ENCODE measurements at regions of chr10 and their contacts with region 1.

Region 1: GRCh38 chr10:88944813-88945212 is 7.8 kb downstream of the ACTA2 start:
- DNase-seq: peak; percentile 23
- H3K4me3 ChIP-seq: no peak overlapping the region
- H3K27ac ChIP-seq: no peak overlapping the region
- H3K4me1 ChIP-seq: peaks cover 11% of the 10 kb centered on the region
- CTCF ChIP-seq: no peak

Region 2: GRCh38 chr10:88386821-88387773 is 557.7 kb before region 1 on chr10:
- CTCF ChIA-PET with region 1: no interaction called
- POLR2A ChIA-PET with region 1: no interaction called
- intact Hi-C with region 1: no loop called
- DNase-seq: peak; percentile 91
- H3K4me3 ChIP-seq: peak overlapping the region; percentile 65
- H3K27ac ChIP-seq: peak overlapping the region; percentile 99
- H3K4me1 ChIP-seq: peaks cover 85% of the 10 kb centered on the region
- CTCF ChIP-seq: no peak

Region 3: DNA sequence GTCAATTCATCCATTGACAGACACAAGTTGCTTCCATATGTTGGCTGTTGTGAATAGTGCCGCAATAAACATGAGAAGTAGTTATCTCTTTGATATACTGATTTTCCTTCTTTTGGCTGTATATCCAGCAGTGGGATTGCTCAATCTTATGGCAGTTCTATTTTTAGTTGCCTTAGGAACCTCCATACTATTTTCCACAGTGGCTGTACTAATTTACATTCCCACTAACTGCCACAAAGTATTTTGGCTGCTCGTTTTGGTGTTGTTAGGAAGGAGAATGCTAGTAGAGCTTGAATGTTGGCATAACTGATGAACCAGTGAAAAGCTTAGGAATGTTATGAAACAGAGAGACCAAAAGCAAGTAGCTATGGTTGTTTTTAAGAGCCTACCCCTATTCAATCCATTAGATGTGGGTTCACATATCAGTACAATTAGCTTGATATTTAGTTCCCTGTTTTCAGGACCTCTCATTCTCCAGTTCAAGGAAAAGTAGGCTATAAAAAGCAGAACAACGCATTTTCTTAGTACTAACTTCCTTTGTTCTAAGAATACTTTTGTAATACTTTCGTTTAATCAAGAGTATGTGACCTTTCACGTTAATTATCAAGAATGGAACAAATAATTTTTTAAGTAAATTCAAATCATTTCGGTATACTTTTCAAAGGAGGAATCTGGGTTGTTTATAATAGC is 146.1 kb after region 1 on chr10:
- CTCF ChIA-PET with region 1: no interaction called
- POLR2A ChIA-PET with region 1: no interaction called
- intact Hi-C with region 1: no loop called
- DNase-seq: no peak
- H3K4me3 ChIP-seq: no peak overlapping the region
- H3K27ac ChIP-seq: no peak overlapping the region
- H3K4me1 ChIP-seq: no peaks in the 10 kb centered on the region
- CTCF ChIP-seq: no peak

Region 4: GRCh38 chr10:89574368-89574767 is 629.6 kb after region 1 on chr10:
- CTCF ChIA-PET with region 1: no interaction called
- POLR2A ChIA-PET with region 1: no interaction called
- intact Hi-C with region 1: loop called (anchors 10 kb)
- DNase-seq: no peak
- H3K4me3 ChIP-seq: no peak overlapping the region
- H3K27ac ChIP-seq: no peak overlapping the region
- H3K4me1 ChIP-seq: no peaks in the 10 kb centered on the region
- CTCF ChIP-seq: no peak

Measured in OCI-LY7 (cell line).